Right ventricle myocardium inferior (tissue), 1 donor: ENCODE measurements at regions of chr16 and their contacts with region 1.

Region 1: DNA sequence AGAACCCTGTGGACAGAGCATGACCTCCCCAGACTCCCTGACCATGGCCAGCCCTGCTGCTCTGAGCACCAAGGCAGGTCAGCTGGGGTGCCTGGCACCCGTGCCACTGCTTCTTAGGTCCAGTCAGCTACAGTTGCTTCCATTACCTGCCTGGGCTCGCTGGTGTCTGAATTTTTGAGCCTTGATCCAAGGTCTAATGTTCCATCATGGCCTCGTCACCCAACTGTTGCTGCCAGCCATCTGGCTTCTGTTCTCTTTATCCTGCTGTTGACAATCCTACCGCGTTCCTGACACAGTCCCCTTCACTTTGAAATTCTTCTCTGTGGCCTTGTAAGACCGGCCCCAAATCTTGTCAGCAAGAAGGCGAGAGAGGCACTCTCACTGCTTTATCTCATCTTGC is 16.7 kb downstream of the GLYR1 start:
- DNase-seq: no peak
- ATAC-seq: peak; percentile 12

Region 2: DNA sequence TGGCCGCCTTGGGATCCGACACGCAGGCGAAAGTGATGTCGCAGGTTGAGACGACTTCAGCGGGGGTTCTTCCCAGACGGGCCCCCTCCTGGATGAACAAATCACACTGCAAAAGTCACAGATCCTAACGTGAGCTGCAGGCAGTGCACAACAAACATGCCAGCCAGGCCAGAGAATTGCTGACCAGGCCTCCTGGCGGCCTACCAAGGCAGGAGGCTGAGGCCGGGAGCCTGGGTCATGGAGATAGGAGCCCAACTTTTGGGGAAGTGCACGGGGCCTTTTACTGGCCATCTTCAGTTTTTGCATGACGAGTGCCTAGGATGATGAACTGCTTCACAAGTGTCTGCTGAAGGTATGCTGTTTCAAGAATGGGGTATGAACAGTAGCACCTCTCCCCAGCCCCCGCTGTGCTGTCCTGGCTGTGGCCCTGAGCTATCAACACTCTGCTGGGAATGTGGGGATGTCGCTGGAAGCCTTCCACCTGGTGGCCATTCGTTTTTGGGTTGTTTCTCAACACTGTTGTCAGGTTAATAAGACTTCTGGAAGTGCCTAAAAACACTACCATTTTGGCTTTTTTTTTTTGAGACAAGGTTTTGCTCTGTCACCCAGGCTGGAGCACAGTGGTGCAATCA is 15.8 kb before region 1 on chr16:
- intact Hi-C with region 1: loop called (anchors 2 kb)
- DNase-seq: peak; percentile 58
- ATAC-seq: peak; percentile 67

Region 3: GRCh38 chr16:4846891-4847773 is 16.7 kb after region 1 on chr16 and contains the starts of genes GLYR1 and UBN1:
- intact Hi-C with region 1: loop called (anchors 2 kb)
- DNase-seq: peak; percentile 100
- ATAC-seq: peak; percentile 98
- total RNA-seq, gene GLYR1: 88.8 TPM
- total RNA-seq, gene UBN1: 45.2 TPM

Region 4: DNA sequence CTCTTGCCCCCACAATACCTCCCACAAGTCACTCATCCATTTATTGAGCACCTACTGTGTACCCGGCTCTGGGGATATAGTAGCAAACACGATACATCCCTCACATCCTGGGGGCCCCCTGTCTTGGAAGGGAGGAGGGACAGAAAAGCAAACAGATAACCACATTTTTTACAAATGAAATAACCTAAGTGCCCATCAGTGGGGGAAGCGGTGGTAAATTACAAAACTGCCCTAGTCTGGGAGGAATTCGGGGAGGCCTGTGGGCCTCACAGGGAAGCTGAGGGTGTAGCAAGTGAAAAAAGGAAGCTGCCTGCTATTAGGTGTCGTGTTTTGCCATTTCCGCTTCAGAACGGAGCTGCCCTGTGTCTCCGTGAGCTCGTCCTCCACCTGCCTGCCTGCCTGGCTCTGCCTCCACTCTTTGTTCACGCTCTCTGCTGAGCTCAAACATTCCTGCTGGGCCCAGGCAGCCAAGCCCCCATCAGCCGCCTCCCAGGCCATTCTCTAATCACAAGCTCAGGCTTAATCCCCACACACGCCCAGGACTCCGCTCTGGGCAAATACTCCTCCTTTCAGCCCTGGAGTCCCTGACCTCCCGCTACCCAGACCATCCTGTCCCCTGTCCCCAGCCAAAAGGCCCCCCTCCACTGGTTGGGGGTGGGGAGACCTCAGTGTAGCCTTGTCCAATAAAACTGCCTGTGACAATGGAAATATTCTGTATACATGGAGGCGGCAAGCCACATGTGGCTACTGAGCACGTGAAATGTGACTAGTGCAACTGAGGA is 117.5 kb after region 1 on chr16:
- intact Hi-C with region 1: no loop called
- DNase-seq: no peak
- ATAC-seq: no peak